Dorsolateral prefrontal cortex (tissue), 120 donors: ENCODE measurements at regions of chr1 and their contacts with region 1.

Region 1: DNA sequence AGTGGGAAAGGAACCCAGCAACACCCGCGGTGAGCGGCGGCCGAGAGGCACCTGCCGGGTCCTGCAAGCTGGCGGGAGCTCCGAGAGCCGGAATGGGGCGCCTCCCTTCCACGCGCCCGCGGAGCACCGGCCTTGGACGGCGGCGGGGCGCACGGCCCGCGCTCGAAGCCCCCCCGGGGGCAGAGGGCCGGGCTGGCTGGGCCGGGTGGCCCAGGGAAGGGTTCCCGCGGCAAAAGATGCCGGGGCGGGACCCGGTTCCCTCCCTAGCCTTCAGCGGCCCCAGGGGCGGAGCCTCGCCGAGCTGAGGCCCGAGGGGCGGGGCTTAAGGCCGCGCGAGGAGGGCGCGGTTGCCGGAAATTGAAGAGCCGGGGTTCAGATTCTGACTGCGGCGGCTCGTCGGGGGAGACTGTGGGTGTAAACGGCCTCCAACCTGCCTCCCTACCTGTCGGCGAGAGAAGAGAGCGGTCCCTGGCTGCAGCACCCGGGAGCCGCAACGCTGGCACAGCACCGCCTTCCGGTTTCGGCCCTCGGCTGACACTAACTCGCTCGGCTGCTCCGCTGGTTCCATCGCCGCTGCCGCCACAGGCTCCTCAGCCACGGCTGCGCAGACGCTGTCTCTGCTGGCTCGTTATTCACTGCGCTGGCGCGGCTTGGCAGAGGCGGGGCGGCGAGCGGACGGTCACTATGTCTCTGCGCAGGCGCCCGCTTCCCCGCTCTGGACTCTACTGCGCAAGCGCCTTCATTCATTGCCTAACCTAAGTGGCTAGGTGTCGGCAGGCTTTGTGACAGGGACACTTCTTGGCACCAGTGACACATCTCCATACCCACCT is at the start of gene RABIF:
- DNase-seq: peak; percentile 92 to 97 (median 96)
- H3K4me3 ChIP-seq: peak within 1 kb of the TSS; percentile 55 to 98 (median 89)
- H3K27ac ChIP-seq: peak within 1 kb of the TSS; percentile 81 to 100 (median 97)
- H3K27me3 ChIP-seq: no peaks in the 10 kb centered on the region
- CTCF ChIP-seq: peak in 40 of 56 donors; percentile 7 to 58 (median 36)
- total RNA-seq, gene RABIF: 9.4 to 26.6 (median 17.3) TPM

Region 2: GRCh38 chr1:202835548-202836090 is 53.1 kb before region 1 on chr1:
- intact Hi-C with region 1: no loop called
- DNase-seq: no peak
- H3K4me3 ChIP-seq: no peak overlapping the region
- H3K27ac ChIP-seq: peak overlapping the region in 3 of 59 donors; percentile 3 to 52 (median 14)
- H3K27me3 ChIP-seq: no peaks in the 10 kb centered on the region
- CTCF ChIP-seq: no peak

Region 3: DNA sequence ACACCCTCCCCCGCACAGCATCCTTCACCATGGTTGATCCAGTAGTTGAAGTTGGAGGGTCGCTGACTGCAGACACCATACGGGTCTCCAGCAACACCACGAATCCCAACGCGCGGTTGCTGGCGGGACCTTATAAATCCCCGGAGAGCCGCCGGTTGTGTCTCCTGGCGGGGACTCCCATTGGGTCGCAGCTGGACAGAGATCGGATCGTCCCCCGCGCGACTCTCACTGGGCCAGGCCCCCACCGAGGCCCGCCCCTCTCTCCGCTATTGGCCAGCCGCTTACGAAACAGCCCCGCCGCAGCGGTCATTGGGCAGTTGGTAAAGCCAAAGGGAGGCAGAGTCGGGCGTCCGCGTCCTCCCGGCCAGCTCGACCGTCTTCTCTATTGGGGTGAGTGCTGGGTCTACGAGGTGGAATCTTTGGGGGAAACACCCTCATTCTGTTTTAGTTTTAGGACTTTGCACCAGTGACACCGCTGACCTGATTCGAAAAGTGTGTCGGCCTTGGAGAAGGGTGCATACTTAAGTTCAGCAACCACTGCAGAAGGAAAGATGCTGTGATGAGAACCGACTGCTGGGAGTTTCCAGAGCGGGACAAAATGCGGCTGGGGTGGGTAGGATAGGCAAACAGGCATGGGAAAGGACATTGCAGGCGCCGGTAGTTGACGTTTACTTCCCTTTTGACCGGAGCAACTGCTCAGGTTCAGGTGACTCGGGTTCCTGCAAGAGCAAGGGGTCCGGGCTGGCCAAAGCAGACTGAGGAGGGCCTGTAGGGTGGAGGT is 27.1 kb before region 1 on chr1:
- intact Hi-C with region 1: loop called in 1 of 2 experiments (anchors 2 kb)
- DNase-seq: peak; percentile 89 to 97 (median 94)
- H3K4me3 ChIP-seq: peak overlapping the region; percentile 61 to 92 (median 79)
- H3K27ac ChIP-seq: peak overlapping the region in 33 of 59 donors; percentile 0 to 78 (median 43)
- H3K27me3 ChIP-seq: no peaks in the 10 kb centered on the region
- CTCF ChIP-seq: peak in 22 of 56 donors; percentile 1 to 49 (median 16)

Region 4: GRCh38 chr1:202926720-202927491 is 38.2 kb after region 1 on chr1 and contains the start of gene KLHL12:
- intact Hi-C with region 1: loop called (anchors 2 kb)
- DNase-seq: peak; percentile 93 to 99 (median 96)
- H3K4me3 ChIP-seq: peak within 1 kb of the TSS; percentile 55 to 99 (median 93)
- H3K27ac ChIP-seq: peak within 1 kb of the TSS; percentile 78 to 98 (median 95)
- H3K27me3 ChIP-seq: no peaks in the 10 kb centered on the region
- CTCF ChIP-seq: peak in 54 of 56 donors; percentile 13 to 62 (median 45)
- total RNA-seq, gene KLHL12: 22.3 to 47.0 (median 36.2) TPM

Region 5: DNA sequence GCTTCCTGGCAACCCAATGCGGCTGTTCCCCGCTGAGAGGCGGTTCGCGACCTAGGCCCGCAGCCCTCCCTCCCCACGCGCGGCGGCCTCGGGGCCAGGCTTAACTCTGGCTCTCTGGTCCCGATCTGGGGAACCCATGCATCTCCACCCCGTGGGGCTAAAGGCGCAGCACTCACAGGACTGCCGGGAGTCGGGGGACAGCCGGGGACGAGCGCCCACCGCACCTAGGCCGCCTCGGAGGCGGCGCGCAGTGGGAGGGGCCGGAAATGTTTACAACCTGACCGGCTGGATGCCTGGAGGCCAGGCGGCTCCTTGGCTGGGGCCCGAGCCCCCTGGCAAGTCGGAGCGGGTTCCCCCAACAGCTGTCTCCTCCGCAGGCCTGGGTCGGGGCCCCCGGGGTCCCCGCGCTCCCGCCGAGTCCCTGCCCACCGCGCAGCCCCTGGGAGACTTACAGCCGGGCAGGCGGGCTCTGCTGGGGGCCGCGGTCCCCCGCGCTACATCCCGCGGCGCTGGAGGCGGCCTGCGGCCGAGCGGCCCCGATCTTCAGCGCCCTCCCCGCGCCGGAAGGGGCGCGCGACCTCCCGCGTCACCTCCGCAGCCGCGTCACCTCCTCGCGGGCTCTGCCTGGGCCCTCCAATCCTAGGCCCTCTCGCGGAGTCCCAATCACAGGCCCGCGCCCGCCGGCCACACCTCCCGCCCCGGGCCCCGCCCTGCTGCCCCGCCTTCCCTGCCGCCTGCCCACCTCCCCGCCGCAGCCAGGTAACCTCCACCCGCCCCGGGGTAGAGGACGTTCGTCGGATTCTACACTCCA is 69.2 kb after region 1 on chr1 and contains the start of gene ADIPOR1:
- intact Hi-C with region 1: loop called in 1 of 2 experiments (anchors 2 kb)
- DNase-seq: peak; percentile 82 to 96 (median 91)
- H3K4me3 ChIP-seq: peak within 1 kb of the TSS; percentile 68 to 100 (median 97)
- H3K27ac ChIP-seq: peak within 1 kb of the TSS; percentile 24 to 97 (median 89)
- H3K27me3 ChIP-seq: no peaks in the 10 kb centered on the region
- CTCF ChIP-seq: peak in 33 of 56 donors; percentile 7 to 59 (median 30)
- total RNA-seq, gene ADIPOR1: 51.2 to 87.2 (median 64.4) TPM